Activated CD8-positive, alpha-beta T cell treated with anti-CD3 and anti-CD28 coated beads for 36 hours (primary cell): ENCODE measurements at regions of chr4 and their contacts with region 1.

Region 1: GRCh38 chr4:123396307-123397143 is at the start of gene SPRY1:
- DNase-seq: peak; percentile 95
- ATAC-seq: peak; percentile 64
- H3K4me3 Mint-ChIP-seq: peak within 1 kb of the TSS; percentile 86
- H3K27ac Mint-ChIP-seq: peak within 1 kb of the TSS; percentile 94
- H3K4me1 Mint-ChIP-seq: peaks cover 20% of the 10 kb centered on the region
- H3K27me3 Mint-ChIP-seq: no peaks in the 10 kb centered on the region
- CTCF ChIP-seq: no peak
- total RNA-seq, gene SPRY1: 137 to 144 TPM

Region 2: DNA sequence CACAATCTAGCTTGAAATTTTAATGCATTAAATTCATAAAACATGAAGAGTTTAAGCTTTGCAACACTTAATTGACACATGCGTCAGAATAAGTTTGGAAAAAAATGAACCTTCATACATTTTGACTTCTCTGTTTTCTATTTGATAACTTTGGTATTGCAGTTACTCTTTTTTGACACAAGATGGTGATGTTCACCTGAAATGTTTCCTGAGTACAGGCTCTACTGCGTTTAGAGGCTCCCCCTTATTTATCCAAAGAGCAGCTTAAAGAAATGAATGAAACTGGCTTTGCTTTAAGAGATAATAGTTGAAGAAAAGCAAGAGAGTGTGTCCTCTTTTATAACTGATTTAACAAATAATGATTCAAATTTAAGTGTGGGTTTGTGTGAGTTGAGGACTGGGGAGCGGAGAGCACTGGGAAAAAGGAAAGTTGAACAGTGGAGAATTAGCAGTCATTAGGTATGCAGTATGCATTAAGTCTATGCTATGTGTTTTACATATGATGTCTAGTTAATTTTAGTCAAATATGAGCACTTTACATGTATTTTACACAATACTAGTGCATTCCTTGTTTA is 293.5 kb before region 1 on chr4:
- CTCF ChIA-PET with region 1: interaction called, 3 read pairs
- POLR2A ChIA-PET with region 1: no interaction called
- intact Hi-C with region 1: loop called (anchors 10 kb)
- DNase-seq: no peak
- ATAC-seq: peak; percentile 75
- H3K4me3 Mint-ChIP-seq: no peak overlapping the region
- H3K27ac Mint-ChIP-seq: no peak overlapping the region
- H3K4me1 Mint-ChIP-seq: no peaks in the 10 kb centered on the region
- H3K27me3 Mint-ChIP-seq: no peaks in the 10 kb centered on the region
- CTCF ChIP-seq: peak; percentile 77

Region 3: GRCh38 chr4:123412091-123412505 is 15.6 kb after region 1 on chr4:
- CTCF ChIA-PET with region 1: interaction called, 6 read pairs
- POLR2A ChIA-PET with region 1: interaction called, 56 read pairs
- intact Hi-C with region 1: loop called (anchors 2 kb)
- DNase-seq: no peak
- ATAC-seq: peak; percentile 49
- H3K4me3 Mint-ChIP-seq: peak overlapping the region; percentile 39
- H3K27ac Mint-ChIP-seq: peak overlapping the region; percentile 92
- H3K4me1 Mint-ChIP-seq: peaks cover 49% of the 10 kb centered on the region
- H3K27me3 Mint-ChIP-seq: no peaks in the 10 kb centered on the region
- CTCF ChIP-seq: no peak

Region 4: DNA sequence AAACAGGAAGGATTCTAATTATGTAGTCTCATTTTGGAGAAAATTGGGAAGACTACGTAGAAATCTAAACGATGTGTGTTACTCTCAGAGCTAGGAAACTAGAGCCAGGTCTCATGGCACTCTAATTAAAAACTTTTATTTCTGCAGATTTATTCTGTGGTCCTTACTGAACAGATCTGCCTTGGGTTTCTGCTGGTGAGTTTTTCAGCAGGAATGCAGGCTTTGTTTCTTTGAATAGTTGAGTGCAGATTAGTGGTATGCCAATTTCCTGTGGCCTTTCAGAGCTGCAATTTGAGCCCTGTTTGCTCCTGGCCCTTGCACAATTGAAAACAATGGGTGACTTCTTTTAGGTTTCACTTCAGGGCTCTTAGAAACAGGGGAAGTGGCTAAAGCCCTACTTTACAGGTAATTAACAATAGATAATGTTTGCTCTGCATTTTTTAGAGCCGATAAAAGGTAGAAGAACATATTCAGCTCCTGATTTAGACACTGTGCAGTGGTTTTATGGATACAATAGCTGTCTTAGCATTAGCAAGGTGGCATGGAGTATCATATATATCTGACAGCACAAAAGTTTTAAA is 21.9 kb after region 1 on chr4:
- CTCF ChIA-PET with region 1: interaction called, 5 read pairs
- POLR2A ChIA-PET with region 1: interaction called, 56 read pairs
- intact Hi-C with region 1: loop called (anchors 2 kb)
- DNase-seq: peak; percentile 30
- ATAC-seq: no peak
- H3K4me3 Mint-ChIP-seq: peak overlapping the region; percentile 15
- H3K27ac Mint-ChIP-seq: peak overlapping the region; percentile 100
- H3K4me1 Mint-ChIP-seq: peaks cover 84% of the 10 kb centered on the region
- H3K27me3 Mint-ChIP-seq: no peaks in the 10 kb centered on the region
- CTCF ChIP-seq: no peak

Region 5: GRCh38 chr4:123444290-123444731 is 47.8 kb after region 1 on chr4:
- CTCF ChIA-PET with region 1: no interaction called
- POLR2A ChIA-PET with region 1: interaction called, 7 read pairs
- intact Hi-C with region 1: loop called (anchors 2 kb)
- DNase-seq: peak; percentile 84
- ATAC-seq: peak; percentile 86
- H3K4me3 Mint-ChIP-seq: peak overlapping the region; percentile 62
- H3K27ac Mint-ChIP-seq: peak overlapping the region; percentile 93
- H3K4me1 Mint-ChIP-seq: peaks cover 36% of the 10 kb centered on the region
- H3K27me3 Mint-ChIP-seq: no peaks in the 10 kb centered on the region
- CTCF ChIP-seq: no peak

Region 6: GRCh38 chr4:123564758-123565346 is 168.3 kb after region 1 on chr4:
- CTCF ChIA-PET with region 1: interaction called, 42 read pairs
- POLR2A ChIA-PET with region 1: interaction called, 3 read pairs
- intact Hi-C with region 1: no loop called
- DNase-seq: peak; percentile 71
- ATAC-seq: peak; percentile 100
- H3K4me3 Mint-ChIP-seq: no peak overlapping the region
- H3K27ac Mint-ChIP-seq: no peak overlapping the region
- H3K4me1 Mint-ChIP-seq: peaks cover 6% of the 10 kb centered on the region
- H3K27me3 Mint-ChIP-seq: no peaks in the 10 kb centered on the region
- CTCF ChIP-seq: peak; percentile 89

Region 7: GRCh38 chr4:123661080-123661737 is 264.7 kb after region 1 on chr4:
- CTCF ChIA-PET with region 1: interaction called, 7 read pairs
- POLR2A ChIA-PET with region 1: interaction called, 3 read pairs
- intact Hi-C with region 1: loop called (anchors 5 kb)
- DNase-seq: no peak
- ATAC-seq: no peak
- H3K4me3 Mint-ChIP-seq: no peak overlapping the region
- H3K27ac Mint-ChIP-seq: no peak overlapping the region
- H3K4me1 Mint-ChIP-seq: peaks cover 15% of the 10 kb centered on the region
- H3K27me3 Mint-ChIP-seq: peaks cover 2% of the 10 kb centered on the region
- CTCF ChIP-seq: peak; percentile 51

Region 8: GRCh38 chr4:123776254-123776653 is 379.7 kb after region 1 on chr4:
- CTCF ChIA-PET with region 1: no interaction called
- POLR2A ChIA-PET with region 1: no interaction called
- intact Hi-C with region 1: no loop called
- DNase-seq: no peak
- ATAC-seq: peak; percentile 39
- H3K4me3 Mint-ChIP-seq: no peak overlapping the region
- H3K27ac Mint-ChIP-seq: no peak overlapping the region
- H3K4me1 Mint-ChIP-seq: peaks cover 3% of the 10 kb centered on the region
- H3K27me3 Mint-ChIP-seq: peaks cover 10% of the 10 kb centered on the region
- CTCF ChIP-seq: no peak